AG04450 (cell line): ENCODE measurements at regions of chr3 and their contacts with region 1.

Region 1: DNA sequence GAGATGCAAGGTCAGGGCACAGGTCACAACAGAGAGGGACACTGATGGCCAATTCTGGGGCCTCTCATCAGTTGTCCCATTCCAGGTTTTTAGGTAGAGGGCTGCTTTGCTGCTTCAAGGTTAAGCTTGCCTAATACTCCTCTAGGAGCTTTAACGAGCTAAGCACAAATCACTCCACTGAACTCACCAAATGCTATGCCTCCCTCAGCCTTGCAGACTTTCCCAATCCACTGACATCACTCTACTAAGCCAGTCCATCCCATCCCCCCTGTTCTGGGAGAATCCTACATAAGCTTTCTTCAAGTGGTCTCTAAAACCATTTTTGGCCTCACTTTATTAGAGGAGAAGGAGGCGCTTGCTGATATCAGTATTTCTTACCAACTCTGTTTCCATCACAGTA is 24.8 kb upstream of the PDCD6IP start:
- DNase-seq: no peak
- H3K4me3 ChIP-seq: no peak overlapping the region
- H3K27ac ChIP-seq: no peak overlapping the region
- H3K27me3 ChIP-seq: no peaks in the 10 kb centered on the region
- CTCF ChIP-seq: no peak

Region 2: GRCh38 chr3:33131331-33132018 is 642.2 kb before region 1 on chr3:
- CTCF ChIA-PET with region 1: interaction called, 15 read pairs
- POLR2A ChIA-PET with region 1: no interaction called
- DNase-seq: peak; percentile 41
- H3K4me3 ChIP-seq: no peak overlapping the region
- H3K27ac ChIP-seq: no peak overlapping the region
- H3K27me3 ChIP-seq: no peaks in the 10 kb centered on the region
- CTCF ChIP-seq: peak; percentile 72

Region 3: GRCh38 chr3:33629219-33629618 is 144.4 kb before region 1 on chr3:
- CTCF ChIA-PET with region 1: interaction called, 54 read pairs
- POLR2A ChIA-PET with region 1: no interaction called
- DNase-seq: no peak
- H3K4me3 ChIP-seq: no peak overlapping the region
- H3K27ac ChIP-seq: no peak overlapping the region
- H3K27me3 ChIP-seq: no peaks in the 10 kb centered on the region
- CTCF ChIP-seq: no peak

Region 4: GRCh38 chr3:33636125-33636850 is 137.3 kb before region 1 on chr3:
- CTCF ChIA-PET with region 1: interaction called, 61 read pairs
- POLR2A ChIA-PET with region 1: no interaction called
- DNase-seq: peak; percentile 42
- H3K4me3 ChIP-seq: no peak overlapping the region
- H3K27ac ChIP-seq: no peak overlapping the region
- H3K27me3 ChIP-seq: no peaks in the 10 kb centered on the region
- CTCF ChIP-seq: peak; percentile 67

Region 5: DNA sequence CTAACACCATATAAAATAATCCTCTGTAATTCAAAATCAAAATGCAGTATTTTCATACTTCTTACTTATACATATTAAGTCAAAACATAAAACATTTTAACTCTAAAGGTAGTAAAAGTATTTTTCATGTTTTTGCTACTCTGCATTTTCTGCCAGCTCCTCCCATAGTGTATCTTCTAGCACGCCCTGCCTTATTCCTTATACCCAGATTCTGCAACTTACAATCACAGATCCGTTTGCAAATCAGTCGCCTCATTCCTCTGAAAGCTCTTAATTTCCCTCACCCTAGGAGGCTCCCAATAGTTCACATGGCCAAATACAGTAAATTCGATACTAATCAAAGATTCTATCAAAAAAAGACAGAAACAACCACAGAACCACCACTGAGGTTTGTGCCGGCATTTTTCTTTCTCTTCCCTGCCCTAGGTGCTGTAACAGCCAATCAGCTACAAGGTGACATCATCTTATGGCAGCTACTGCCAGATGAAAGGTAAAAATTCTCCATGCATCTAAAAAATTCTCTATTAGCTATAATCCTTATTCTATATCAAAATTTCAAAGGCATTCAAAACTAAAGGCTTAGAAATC is 128.5 kb before region 1 on chr3:
- CTCF ChIA-PET with region 1: interaction called, 27 read pairs
- POLR2A ChIA-PET with region 1: no interaction called
- DNase-seq: no peak
- H3K4me3 ChIP-seq: no peak overlapping the region
- H3K27ac ChIP-seq: no peak overlapping the region
- H3K27me3 ChIP-seq: no peaks in the 10 kb centered on the region
- CTCF ChIP-seq: no peak

Region 6: DNA sequence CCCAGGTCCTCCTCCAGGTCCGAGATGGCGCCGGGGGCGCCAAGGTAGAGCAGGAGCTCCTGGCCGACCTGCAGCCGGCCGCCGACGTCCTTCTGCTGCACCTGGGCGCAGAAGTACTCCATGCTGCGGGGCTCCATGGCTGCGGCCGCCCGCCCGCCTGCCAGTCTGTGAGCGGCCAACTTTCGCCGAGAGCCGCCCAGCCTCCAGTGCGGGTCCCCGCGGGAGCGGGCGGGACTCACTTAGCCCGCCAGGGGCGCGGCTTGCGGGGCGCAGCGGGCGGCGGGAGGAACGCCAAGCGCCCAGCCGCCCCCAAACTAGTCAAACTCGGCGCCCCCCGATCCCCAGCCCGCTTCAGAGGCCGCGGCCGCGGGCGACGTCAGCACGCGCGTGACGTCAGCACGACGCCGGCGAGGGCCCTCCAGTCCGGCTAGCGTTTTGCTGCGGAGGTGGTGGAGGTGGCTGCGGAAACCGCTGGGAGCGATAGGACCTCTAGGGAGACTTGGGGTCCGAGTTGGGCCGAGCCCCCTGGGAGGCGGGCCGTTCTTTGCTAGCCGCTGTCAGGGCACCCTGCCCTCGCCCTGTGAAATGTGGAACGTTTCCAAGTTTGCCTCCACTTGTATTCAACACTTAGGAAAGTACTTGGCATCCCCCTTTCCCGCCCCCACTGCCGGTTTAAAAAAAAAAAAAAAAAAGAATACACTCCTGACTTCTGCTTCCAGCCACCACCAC is 55.6 kb before region 1 on chr3 and contains the start of gene CLASP2:
- CTCF ChIA-PET with region 1: interaction called, 10 read pairs
- POLR2A ChIA-PET with region 1: no interaction called
- DNase-seq: peak; percentile 55
- H3K4me3 ChIP-seq: peak within 1 kb of the TSS; percentile 78
- H3K27ac ChIP-seq: peak within 1 kb of the TSS; percentile 82
- H3K27me3 ChIP-seq: no peaks in the 10 kb centered on the region
- CTCF ChIP-seq: no peak
- polyA plus RNA-seq, gene CLASP2: 19.2 and 27.4 TPM in 2 replicates

Region 7: GRCh38 chr3:33749546-33750210 is 24.0 kb before region 1 on chr3:
- CTCF ChIA-PET with region 1: interaction called, 10 read pairs
- POLR2A ChIA-PET with region 1: no interaction called
- DNase-seq: peak; percentile 20
- H3K4me3 ChIP-seq: no peak overlapping the region
- H3K27ac ChIP-seq: no peak overlapping the region
- H3K27me3 ChIP-seq: no peaks in the 10 kb centered on the region
- CTCF ChIP-seq: no peak

Region 8: DNA sequence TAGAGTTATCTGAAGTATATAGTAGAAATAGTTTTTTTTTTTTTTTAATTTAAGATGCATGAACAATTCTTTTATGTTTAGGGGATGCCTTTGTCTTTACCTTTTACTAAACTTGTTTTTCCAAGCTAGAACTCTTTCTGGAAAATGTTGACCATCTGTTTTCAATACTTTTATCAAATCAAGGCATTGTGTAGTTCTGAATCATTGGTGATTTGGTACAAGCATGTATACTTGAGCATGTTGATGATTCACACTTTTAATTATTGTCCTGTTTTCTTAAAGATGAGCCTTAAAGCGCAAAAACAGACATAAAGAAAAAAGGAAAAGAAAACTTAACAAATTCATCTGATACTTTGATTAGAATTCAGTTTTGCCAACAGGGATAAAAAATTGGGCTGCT is 53.1 kb after region 1 on chr3:
- CTCF ChIA-PET with region 1: no interaction called
- POLR2A ChIA-PET with region 1: no interaction called
- DNase-seq: peak; percentile 11
- H3K4me3 ChIP-seq: no peak overlapping the region
- H3K27ac ChIP-seq: no peak overlapping the region
- H3K27me3 ChIP-seq: no peaks in the 10 kb centered on the region
- CTCF ChIP-seq: no peak